Calu3 (cell line): ENCODE measurements at regions of chr17 and their contacts with region 1.

Region 1: GRCh38 chr17:72421128-72422092 is 300.6 kb downstream of the SOX9 start:
- DNase-seq: peak; percentile 90
- H3K4me3 Mint-ChIP-seq: peak overlapping the region; percentile 51
- H3K27ac Mint-ChIP-seq: peak overlapping the region; percentile 96
- H3K4me1 Mint-ChIP-seq: peaks cover 61% of the 10 kb centered on the region
- H3K27me3 Mint-ChIP-seq: no peaks in the 10 kb centered on the region
- CTCF ChIP-seq: no peak

Region 2: DNA sequence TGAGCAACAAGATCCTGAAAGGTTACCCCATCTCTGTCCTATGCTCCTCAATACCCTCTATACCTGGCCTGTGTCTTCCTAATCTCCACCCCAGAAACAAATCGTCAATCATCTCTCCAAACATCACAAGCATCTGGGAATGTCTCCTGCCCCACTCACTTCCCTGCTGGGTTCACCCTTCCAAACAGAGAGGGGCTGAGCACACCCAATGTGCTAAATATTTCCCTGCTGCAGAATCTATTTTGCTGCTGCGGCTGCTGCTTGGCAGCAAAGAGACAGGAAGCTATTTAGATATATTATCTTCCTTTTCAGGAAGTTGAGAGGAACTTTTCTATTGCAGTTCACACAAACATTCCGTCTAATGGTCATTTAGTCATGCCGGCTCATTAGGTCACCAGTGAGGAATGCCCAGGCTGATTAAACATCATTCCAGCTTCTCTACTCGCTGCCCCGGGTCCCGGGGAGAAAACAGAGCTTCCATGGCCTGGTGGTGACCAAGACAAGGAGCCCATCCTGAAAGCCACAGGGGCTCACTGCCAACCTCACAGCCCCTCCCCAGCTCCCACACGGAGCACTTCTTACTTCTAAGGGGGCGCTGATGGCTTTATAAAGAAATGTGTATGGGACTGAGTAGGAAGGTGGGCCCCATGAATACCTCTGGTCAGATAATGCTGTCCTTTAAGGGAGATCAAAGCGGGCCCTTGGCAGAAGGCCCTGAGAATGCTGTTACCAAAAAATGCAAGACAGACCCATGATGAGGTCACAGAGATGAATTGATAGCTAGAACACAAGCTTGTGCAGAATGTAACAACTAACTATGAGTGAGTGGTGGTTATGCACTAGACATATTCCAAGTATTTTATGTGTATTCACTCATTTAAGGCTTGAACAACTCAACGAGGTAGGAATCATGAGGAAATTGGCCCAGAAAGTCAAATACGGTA is 82.3 kb before region 1 on chr17:
- CTCF ChIA-PET with region 1: no interaction called
- intact Hi-C with region 1: loop called (anchors 5 kb)
- DNase-seq: peak; percentile 79
- H3K4me3 Mint-ChIP-seq: peak overlapping the region; percentile 12
- H3K27ac Mint-ChIP-seq: peak overlapping the region; percentile 78
- H3K4me1 Mint-ChIP-seq: peaks cover 40% of the 10 kb centered on the region
- H3K27me3 Mint-ChIP-seq: peaks cover 1% of the 10 kb centered on the region
- CTCF ChIP-seq: no peak

Region 3: GRCh38 chr17:72407336-72407909 is 14.0 kb before region 1 on chr17:
- CTCF ChIA-PET with region 1: interaction called, 6 read pairs
- intact Hi-C with region 1: loop called (anchors 2 kb)
- DNase-seq: peak; percentile 90
- H3K4me3 Mint-ChIP-seq: peak overlapping the region; percentile 65
- H3K27ac Mint-ChIP-seq: peak overlapping the region; percentile 99
- H3K4me1 Mint-ChIP-seq: peaks cover 92% of the 10 kb centered on the region
- H3K27me3 Mint-ChIP-seq: no peaks in the 10 kb centered on the region
- CTCF ChIP-seq: no peak

Region 4: DNA sequence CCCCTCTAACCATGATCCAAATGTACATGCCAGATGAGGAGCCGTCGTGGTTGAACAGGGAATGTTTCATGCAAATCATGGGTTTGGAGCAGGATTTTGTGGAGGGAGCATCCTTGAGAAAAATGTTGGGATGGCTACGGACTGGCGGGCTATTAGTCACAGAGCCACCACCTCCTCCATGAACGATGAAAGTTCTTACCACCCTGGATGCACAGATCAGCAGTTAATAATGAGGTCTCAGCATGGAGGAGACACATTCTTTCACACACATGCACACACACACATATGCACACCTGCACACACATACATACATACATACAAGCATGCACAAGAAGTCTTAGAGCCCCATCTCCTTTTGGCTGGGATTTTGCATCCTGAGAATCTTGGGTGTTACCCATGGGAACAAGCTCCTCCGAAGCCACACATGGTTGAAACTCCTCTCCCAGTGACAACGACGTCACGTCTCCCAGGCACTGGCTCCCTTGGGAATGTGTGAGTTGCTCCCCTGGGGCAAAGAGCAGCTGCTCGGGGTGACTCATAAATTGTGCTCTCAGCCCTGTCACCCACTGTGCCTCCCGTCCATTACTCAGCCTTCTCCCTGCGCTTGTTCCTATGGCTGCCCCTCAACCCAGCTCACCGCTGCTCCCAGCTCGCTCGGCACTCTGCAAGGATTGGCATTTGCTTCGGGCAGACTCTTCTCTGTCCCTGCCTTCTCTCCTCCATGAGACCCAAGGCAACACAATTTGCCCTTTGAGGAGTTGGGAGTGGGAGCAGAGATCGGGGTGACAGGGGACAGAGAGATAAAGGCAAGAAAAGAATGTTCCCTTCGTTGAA is 44.0 kb after region 1 on chr17:
- CTCF ChIA-PET with region 1: interaction called, 6 read pairs
- intact Hi-C with region 1: loop called (anchors 2 kb)
- DNase-seq: peak; percentile 86
- H3K4me3 Mint-ChIP-seq: peak overlapping the region; percentile 58
- H3K27ac Mint-ChIP-seq: no peak overlapping the region
- H3K4me1 Mint-ChIP-seq: peaks cover 61% of the 10 kb centered on the region
- H3K27me3 Mint-ChIP-seq: no peaks in the 10 kb centered on the region
- CTCF ChIP-seq: no peak